Activated CD8-positive, alpha-beta T cell treated with anti-CD3 and anti-CD28 coated beads for 36 hours (primary cell): ENCODE measurements at regions of chr16 and their contacts with region 1.

Region 1: DNA sequence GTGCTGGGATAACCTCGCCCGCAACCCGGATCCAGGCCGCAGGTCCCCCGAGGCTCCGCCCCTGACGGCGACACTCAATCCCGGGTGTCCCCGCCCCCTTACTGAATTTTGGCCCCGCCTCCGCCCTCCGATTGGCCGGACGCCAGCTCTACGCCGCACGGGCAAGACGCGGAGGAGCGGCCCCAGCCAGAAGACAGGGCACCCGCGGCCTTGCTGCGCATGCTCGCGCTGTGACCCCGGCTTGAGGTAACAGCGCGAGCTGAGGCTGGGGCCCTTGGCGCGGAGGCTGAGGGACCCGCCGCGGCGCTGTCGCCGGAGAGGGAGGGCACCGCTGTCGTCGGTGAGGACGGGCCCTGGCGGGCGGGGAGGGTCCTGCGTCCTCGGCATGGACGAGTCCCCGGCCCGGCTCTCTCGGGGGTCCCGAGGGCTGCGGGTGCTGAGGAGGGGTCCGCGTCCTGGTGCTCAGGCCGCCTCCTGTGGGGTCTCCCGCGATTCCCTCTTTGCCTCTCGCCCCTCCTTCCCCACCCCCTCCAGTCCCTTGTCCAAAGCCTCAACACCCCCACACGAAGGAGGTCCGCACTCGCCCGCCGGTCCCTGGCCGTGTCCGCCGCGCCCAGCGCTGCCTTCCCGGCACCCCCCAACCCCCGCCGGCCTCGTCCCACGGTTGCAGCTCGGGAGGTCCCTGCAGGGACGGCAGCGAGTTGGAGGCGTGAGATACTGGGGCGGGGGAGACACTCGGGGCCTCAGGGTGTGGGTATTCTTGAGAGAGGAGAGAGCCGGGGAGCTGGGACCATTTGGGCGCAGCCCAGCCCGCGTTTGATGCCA is at the start of gene FLYWCH2:
- DNase-seq: peak; percentile 99
- ATAC-seq: peak; percentile 84
- H3K4me3 Mint-ChIP-seq: peak within 1 kb of the TSS; percentile 89
- H3K27ac Mint-ChIP-seq: peak within 1 kb of the TSS; percentile 91
- H3K4me1 Mint-ChIP-seq: peaks cover 13% of the 10 kb centered on the region
- H3K27me3 Mint-ChIP-seq: no peaks in the 10 kb centered on the region
- CTCF ChIP-seq: no peak
- total RNA-seq, gene FLYWCH2: 18.9 to 19.3 TPM

Region 2: DNA sequence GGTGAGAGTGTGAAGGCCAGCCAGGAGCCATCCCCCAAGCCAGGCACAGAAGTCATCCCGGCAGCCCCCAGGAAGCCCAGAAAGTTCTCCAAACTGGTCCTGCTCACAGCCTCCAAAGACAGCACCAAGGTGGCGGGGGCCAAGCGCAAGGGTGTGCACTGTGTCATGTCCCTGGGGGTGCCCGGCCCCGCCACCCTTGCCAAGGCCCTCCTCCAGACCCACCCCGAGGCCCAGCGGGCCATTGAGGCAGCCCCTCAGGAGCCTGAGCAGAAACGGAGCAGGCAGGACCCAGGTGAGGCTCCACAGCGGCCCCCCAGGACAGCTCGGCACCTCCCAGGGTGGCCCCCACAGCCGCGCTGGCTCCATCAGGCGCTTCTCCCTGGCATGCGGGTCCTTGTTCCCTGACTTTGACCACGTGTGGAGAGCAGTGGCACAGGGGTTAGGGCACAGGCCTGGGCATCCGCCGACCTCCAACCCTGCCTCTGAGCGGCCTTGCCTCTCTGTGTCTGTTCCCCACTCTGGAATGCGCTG is 13.3 kb after region 1 on chr16:
- CTCF ChIA-PET with region 1: no interaction called
- POLR2A ChIA-PET with region 1: no interaction called
- intact Hi-C with region 1: no loop called
- DNase-seq: no peak
- ATAC-seq: no peak
- H3K4me3 Mint-ChIP-seq: no peak overlapping the region
- H3K27ac Mint-ChIP-seq: no peak overlapping the region
- H3K4me1 Mint-ChIP-seq: no peaks in the 10 kb centered on the region
- H3K27me3 Mint-ChIP-seq: no peaks in the 10 kb centered on the region
- CTCF ChIP-seq: no peak

Region 3: DNA sequence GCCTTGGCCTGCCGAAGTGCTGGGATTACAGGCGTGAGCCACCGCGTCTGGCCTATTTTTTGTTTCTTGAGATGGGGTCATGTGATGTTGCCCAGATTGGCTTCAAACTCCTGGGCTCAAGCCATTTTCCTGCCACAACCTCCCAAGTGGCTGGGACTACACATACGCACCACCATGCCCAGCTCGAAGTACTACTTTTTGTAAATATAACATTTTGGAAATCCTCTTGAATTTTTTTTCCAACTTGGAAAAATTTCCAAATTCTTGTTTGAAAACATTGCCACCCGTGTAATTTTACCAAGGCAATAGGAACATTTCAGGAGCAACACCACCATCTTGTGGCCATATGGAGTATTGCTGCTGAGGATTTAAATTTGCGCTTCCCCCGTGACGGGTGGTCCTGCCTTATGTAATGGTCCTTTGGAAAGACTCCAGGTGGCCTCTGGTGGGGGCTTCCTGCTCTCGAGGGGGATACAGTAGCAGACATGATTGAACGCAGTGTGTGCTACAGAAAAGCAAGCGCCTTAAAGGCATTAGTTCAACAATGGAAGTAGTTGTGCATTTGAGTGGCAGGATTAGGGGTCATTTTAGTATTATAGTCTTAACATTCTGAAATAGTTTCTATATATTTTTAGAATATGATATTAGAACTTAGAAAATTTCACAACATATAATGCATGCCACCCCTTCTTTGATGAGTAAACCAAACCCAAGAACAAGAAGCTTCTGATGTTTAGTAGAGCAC is 36.4 kb after region 1 on chr16:
- CTCF ChIA-PET with region 1: interaction called, 27 read pairs
- POLR2A ChIA-PET with region 1: no interaction called
- intact Hi-C with region 1: loop called (anchors 5 kb)
- DNase-seq: peak; percentile 80
- ATAC-seq: peak; percentile 88
- H3K4me3 Mint-ChIP-seq: no peak overlapping the region
- H3K27ac Mint-ChIP-seq: no peak overlapping the region
- H3K4me1 Mint-ChIP-seq: peaks cover 9% of the 10 kb centered on the region
- H3K27me3 Mint-ChIP-seq: no peaks in the 10 kb centered on the region
- CTCF ChIP-seq: peak; percentile 97